ENCODE measurements at regions of chr4 and their contacts with region 1.

Region 1: GRCh38 chr4:142353149-142353738 is 492.9 kb downstream of the INPP4B start:
- DNase-seq: peak in 2 of 9 experiments; percentile 57 to 70
- ATAC-seq: no peak
- H3K4me3 ChIP-seq: no peak overlapping the region
- H3K4me3 Mint-ChIP-seq: peak overlapping the region; percentile 53
- H3K27ac ChIP-seq: no peak overlapping the region
- H3K27ac Mint-ChIP-seq: peak overlapping the region; percentile 95
- H3K4me1 ChIP-seq: peaks cover 73% of the 10 kb centered on the region
- H3K4me1 Mint-ChIP-seq: peaks cover 95% of the 10 kb centered on the region
- H3K27me3 ChIP-seq: no peaks in the 10 kb centered on the region
- H3K27me3 Mint-ChIP-seq: no peaks in the 10 kb centered on the region
- CTCF ChIP-seq: peak; percentile 96

Region 2: DNA sequence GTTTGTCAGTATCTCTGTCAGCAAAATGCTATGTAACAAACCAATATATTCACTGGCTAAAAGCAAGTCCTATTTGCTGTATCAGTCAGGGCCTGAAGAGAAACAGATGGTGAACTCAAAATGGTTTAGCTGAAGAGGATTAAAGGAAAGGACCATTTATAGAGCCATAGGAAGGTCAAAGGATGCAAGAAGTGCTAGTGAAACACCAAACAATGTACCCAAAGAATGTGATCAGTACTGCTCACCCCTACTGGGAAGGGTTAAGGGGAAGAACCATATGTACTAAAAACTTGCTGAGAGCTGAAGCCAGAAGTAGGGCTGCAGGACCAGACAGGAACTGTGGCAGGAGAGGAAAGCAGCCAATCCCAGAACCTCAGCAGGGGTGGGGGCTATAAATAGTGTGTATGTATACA is 13.5 kb after region 1 on chr4:
- CTCF ChIA-PET with region 1: interaction called, 5 read pairs
- POLR2A ChIA-PET with region 1: interaction called, 5 read pairs
- intact Hi-C with region 1: loop called in 1 of 2 experiments (anchors 1 kb)
- DNase-seq: peak in 1 of 9 experiments; percentile 7
- ATAC-seq: peak; percentile 20
- H3K4me3 ChIP-seq: no peak overlapping the region
- H3K4me3 Mint-ChIP-seq: no peak overlapping the region
- H3K27ac ChIP-seq: no peak overlapping the region
- H3K27ac Mint-ChIP-seq: peak overlapping the region; percentile 49
- H3K4me1 ChIP-seq: peaks cover 35% of the 10 kb centered on the region
- H3K4me1 Mint-ChIP-seq: peaks cover 71% of the 10 kb centered on the region
- H3K27me3 ChIP-seq: no peaks in the 10 kb centered on the region
- H3K27me3 Mint-ChIP-seq: no peaks in the 10 kb centered on the region
- CTCF ChIP-seq: no peak

Region 3: GRCh38 chr4:142379277-142380057 is 26.2 kb after region 1 on chr4:
- CTCF ChIA-PET with region 1: interaction called, 12 read pairs
- POLR2A ChIA-PET with region 1: interaction called, 11 read pairs
- intact Hi-C with region 1: loop called in 1 of 2 experiments (anchors 2 kb)
- DNase-seq: no peak
- ATAC-seq: no peak
- H3K4me3 ChIP-seq: no peak overlapping the region
- H3K4me3 Mint-ChIP-seq: no peak overlapping the region
- H3K27ac ChIP-seq: no peak overlapping the region
- H3K27ac Mint-ChIP-seq: peak overlapping the region; percentile 83
- H3K4me1 ChIP-seq: peaks cover 48% of the 10 kb centered on the region
- H3K4me1 Mint-ChIP-seq: peaks cover 76% of the 10 kb centered on the region
- H3K27me3 ChIP-seq: no peaks in the 10 kb centered on the region
- H3K27me3 Mint-ChIP-seq: no peaks in the 10 kb centered on the region
- CTCF ChIP-seq: no peak

Region 4: GRCh38 chr4:142405021-142405694 is 51.9 kb after region 1 on chr4:
- CTCF ChIA-PET with region 1: interaction called, 37 read pairs
- POLR2A ChIA-PET with region 1: interaction called, 15 read pairs
- intact Hi-C with region 1: loop called in 1 of 2 experiments (anchors 1 kb)
- DNase-seq: peak; percentile 2 to 80 (median 49)
- ATAC-seq: peak; percentile 63
- H3K4me3 ChIP-seq: peak overlapping the region; percentile 67 to 72
- H3K4me3 Mint-ChIP-seq: peak overlapping the region; percentile 91
- H3K27ac ChIP-seq: peak overlapping the region; percentile 53 to 79
- H3K27ac Mint-ChIP-seq: peak overlapping the region; percentile 97
- H3K4me1 ChIP-seq: peaks cover 63% of the 10 kb centered on the region
- H3K4me1 Mint-ChIP-seq: peaks cover 69% of the 10 kb centered on the region
- H3K27me3 ChIP-seq: no peaks in the 10 kb centered on the region
- H3K27me3 Mint-ChIP-seq: no peaks in the 10 kb centered on the region
- CTCF ChIP-seq: no peak

Region 5: DNA sequence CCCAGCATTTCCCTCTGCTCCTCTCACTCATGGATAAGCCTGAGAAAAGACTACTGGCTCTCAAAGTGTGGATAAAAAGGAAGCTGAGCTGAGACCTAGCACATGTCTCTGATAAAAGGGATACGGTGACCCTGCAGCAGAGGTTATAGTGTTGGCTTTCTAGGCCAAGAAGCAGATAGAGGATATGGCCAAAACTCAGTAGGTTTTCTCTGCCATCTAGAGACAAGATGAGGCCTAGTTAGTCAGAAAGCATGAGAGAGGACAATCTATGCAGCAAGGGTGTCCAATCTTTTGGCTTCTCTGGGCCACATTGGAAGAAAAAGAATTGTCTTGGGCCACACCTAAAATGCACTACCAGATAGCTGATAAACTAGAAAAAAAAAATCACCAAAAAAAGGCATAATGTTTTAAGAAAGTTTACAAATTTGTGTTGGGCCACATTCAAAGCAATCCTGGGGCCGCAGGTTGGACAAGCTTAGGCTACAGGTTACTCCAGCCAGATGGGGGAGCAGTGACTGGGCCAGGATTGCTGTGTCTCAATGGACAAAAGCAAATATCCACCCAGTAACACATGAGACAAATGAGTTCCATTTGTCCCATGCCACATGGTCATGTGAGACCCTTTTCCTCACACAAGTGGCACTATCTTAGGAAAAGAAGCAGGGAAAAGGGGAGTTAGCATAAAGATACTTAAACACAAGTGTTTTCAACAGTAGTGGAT is 81.4 kb after region 1 on chr4:
- CTCF ChIA-PET with region 1: interaction called, 4 read pairs
- POLR2A ChIA-PET with region 1: no interaction called
- intact Hi-C with region 1: loop called (anchors 1 to 5 kb)
- DNase-seq: peak in 2 of 9 experiments; percentile 48 to 56
- ATAC-seq: peak; percentile 55
- H3K4me3 ChIP-seq: no peak overlapping the region
- H3K4me3 Mint-ChIP-seq: no peak overlapping the region
- H3K27ac ChIP-seq: no peak overlapping the region
- H3K27ac Mint-ChIP-seq: no peak overlapping the region
- H3K4me1 ChIP-seq: no peaks in the 10 kb centered on the region
- H3K4me1 Mint-ChIP-seq: peaks cover 16% of the 10 kb centered on the region
- H3K27me3 ChIP-seq: no peaks in the 10 kb centered on the region
- H3K27me3 Mint-ChIP-seq: no peaks in the 10 kb centered on the region
- CTCF ChIP-seq: no peak

Region 6: GRCh38 chr4:142719854-142720541 is 366.8 kb after region 1 on chr4:
- CTCF ChIA-PET with region 1: interaction called, 43 read pairs
- POLR2A ChIA-PET with region 1: interaction called, 3 read pairs
- intact Hi-C with region 1: loop called (anchors 1 to 2 kb)
- DNase-seq: peak in 2 of 9 experiments; percentile 48 to 56
- ATAC-seq: peak; percentile 49
- H3K4me3 ChIP-seq: no peak overlapping the region
- H3K4me3 Mint-ChIP-seq: no peak overlapping the region
- H3K27ac ChIP-seq: no peak overlapping the region
- H3K27ac Mint-ChIP-seq: no peak overlapping the region
- H3K4me1 ChIP-seq: peaks cover 3% of the 10 kb centered on the region
- H3K4me1 Mint-ChIP-seq: peaks cover 13% of the 10 kb centered on the region
- H3K27me3 ChIP-seq: no peaks in the 10 kb centered on the region
- H3K27me3 Mint-ChIP-seq: no peaks in the 10 kb centered on the region
- CTCF ChIP-seq: peak; percentile 69

Region 7: DNA sequence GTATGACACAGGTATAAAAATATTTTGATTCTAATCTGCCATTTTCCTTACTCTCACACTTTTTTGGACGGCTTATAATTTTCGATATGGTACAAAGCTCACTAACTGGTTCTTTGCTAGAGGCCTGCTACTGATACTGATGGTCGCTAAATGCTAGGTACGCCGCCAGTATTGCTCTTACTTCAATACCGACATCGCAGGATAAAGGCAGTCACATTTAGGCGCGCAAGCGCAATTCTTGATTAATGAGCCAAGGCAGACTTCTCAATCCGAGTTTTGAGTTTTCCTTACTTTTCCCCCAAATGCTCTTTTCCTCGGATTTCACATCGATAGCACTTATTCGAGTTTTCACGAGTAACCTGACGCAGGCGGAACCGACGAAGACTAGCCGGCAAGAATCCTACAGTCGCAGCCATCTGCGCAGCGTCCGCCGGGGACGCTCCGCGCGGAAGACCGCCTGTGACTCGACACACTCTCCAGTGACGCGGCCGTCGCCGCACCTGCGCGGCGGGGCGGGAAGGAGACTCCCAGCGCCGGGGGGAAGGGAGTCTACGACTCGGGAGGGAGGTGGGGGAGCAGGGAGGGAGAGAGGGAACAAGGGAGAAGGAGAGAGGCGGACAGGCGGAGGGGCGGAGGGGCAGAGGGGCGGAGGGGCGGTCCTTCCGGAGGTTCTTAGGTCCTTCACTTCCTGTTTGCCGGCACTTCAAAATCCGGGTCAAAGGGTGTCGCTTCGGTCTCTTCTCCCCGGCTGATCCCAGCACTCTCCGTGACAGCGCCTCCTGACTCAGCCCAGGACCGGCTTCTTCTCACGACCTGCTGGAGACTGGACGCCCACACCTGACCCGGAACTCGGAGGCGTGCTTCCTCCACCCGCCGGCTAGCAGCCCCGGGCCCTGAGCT is 831.2 kb after region 1 on chr4 and contains the start of gene USP38:
- CTCF ChIA-PET with region 1: no interaction called
- POLR2A ChIA-PET with region 1: no interaction called
- intact Hi-C with region 1: loop called in 1 of 2 experiments (anchors 5 kb)
- DNase-seq: peak; percentile 69 to 94 (median 85)
- ATAC-seq: peak; percentile 82
- H3K4me3 ChIP-seq: peak within 1 kb of the TSS; percentile 48 to 86
- H3K4me3 Mint-ChIP-seq: peak within 1 kb of the TSS; percentile 90
- H3K27ac ChIP-seq: peak within 1 kb of the TSS; percentile 91 to 93
- H3K27ac Mint-ChIP-seq: peak within 1 kb of the TSS; percentile 96
- H3K4me1 ChIP-seq: peaks cover 39% of the 10 kb centered on the region
- H3K4me1 Mint-ChIP-seq: peaks cover 61% of the 10 kb centered on the region
- H3K27me3 ChIP-seq: no peaks in the 10 kb centered on the region
- H3K27me3 Mint-ChIP-seq: no peaks in the 10 kb centered on the region
- CTCF ChIP-seq: no peak
- total RNA-seq, gene USP38: 38.4 to 40.2 TPM

Measured in CD8-positive, alpha-beta T cell (primary cell).